ENCODE measurements at regions of chr15 and their contacts with region 1.

Region 1: GRCh38 chr15:41989259-41989933 is 17.0 kb upstream of the EHD4 start:
- DNase-seq: peak; percentile 89
- ATAC-seq: peak; percentile 88
- H3K4me3 Mint-ChIP-seq: no peak overlapping the region
- H3K27ac Mint-ChIP-seq: no peak overlapping the region
- H3K4me1 Mint-ChIP-seq: no peaks in the 10 kb centered on the region
- H3K27me3 Mint-ChIP-seq: peaks cover 2% of the 10 kb centered on the region

Region 2: GRCh38 chr15:41999290-42000285 is 10.2 kb after region 1 on chr15:
- CTCF ChIA-PET with region 1: interaction called, 11 read pairs
- DNase-seq: no peak
- ATAC-seq: no peak
- H3K4me3 Mint-ChIP-seq: no peak overlapping the region
- H3K27ac Mint-ChIP-seq: no peak overlapping the region
- H3K4me1 Mint-ChIP-seq: no peaks in the 10 kb centered on the region
- H3K27me3 Mint-ChIP-seq: peaks cover 12% of the 10 kb centered on the region

Region 3: GRCh38 chr15:42056934-42057779 is 67.8 kb after region 1 on chr15:
- CTCF ChIA-PET with region 1: interaction called, 78 read pairs
- DNase-seq: peak; percentile 70
- ATAC-seq: peak; percentile 76
- H3K4me3 Mint-ChIP-seq: peak overlapping the region; percentile 53
- H3K27ac Mint-ChIP-seq: peak overlapping the region; percentile 42
- H3K4me1 Mint-ChIP-seq: peaks cover 10% of the 10 kb centered on the region
- H3K27me3 Mint-ChIP-seq: peaks cover 71% of the 10 kb centered on the region

Region 4: DNA sequence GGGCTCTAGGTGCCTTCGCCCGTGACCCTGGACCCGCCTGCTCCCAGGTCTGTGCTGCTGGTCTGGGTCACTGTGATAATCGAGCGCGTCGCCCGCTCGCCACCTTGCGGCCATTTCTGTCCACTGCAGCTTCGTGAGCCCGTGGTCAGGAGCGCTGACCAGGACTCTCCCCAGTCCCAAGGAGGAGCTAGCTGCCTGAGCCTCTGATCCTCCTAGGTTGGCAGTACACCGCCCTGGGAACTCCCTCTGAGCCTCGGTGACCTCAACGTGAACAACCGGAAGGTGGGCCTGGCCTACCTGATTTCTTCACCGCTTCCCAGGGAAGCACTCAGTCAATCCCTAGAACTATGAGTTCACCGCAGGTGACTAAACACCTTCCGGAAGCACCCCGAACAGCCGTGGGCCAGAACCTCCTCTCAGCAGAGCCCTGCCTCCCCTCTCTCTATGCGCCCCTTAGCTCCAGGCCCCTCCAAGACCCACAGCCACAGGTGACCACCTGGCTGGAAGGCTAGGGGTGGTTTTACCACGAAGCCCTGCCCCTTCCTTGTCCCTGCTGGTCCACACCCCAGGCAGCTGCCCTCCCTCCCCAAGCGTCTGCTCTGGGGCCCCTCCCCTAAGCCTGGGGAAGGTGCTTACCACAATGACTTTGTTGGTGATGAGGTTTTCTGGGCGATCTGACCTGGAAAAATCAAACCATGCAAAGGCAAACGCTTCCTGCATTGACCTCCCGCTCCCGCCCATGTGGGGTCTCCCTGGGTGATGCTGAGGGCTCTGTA is 95.3 kb after region 1 on chr15:
- CTCF ChIA-PET with region 1: interaction called, 49 read pairs
- DNase-seq: peak; percentile 52
- ATAC-seq: peak; percentile 76
- H3K4me3 Mint-ChIP-seq: no peak overlapping the region
- H3K27ac Mint-ChIP-seq: no peak overlapping the region
- H3K4me1 Mint-ChIP-seq: peaks cover 8% of the 10 kb centered on the region
- H3K27me3 Mint-ChIP-seq: peaks cover 23% of the 10 kb centered on the region

Region 5: GRCh38 chr15:42131826-42132806 is 142.7 kb after region 1 on chr15:
- CTCF ChIA-PET with region 1: interaction called, 20 read pairs
- DNase-seq: peak; percentile 31
- ATAC-seq: no peak
- H3K4me3 Mint-ChIP-seq: no peak overlapping the region
- H3K27ac Mint-ChIP-seq: no peak overlapping the region
- H3K4me1 Mint-ChIP-seq: peaks cover 1% of the 10 kb centered on the region
- H3K27me3 Mint-ChIP-seq: peaks cover 42% of the 10 kb centered on the region

Region 6: GRCh38 chr15:42137431-42138261 is 148.2 kb after region 1 on chr15:
- CTCF ChIA-PET with region 1: interaction called, 20 read pairs
- DNase-seq: peak; percentile 40
- ATAC-seq: peak; percentile 40
- H3K4me3 Mint-ChIP-seq: no peak overlapping the region
- H3K27ac Mint-ChIP-seq: no peak overlapping the region
- H3K4me1 Mint-ChIP-seq: no peaks in the 10 kb centered on the region
- H3K27me3 Mint-ChIP-seq: peaks cover 8% of the 10 kb centered on the region